MCF 10A (cell line): ENCODE measurements at regions of chr4 and their contacts with region 1.

Region 1: GRCh38 chr4:152045807-152046571 is 285.2 kb upstream of the GATB start:
- DNase-seq: no peak
- H3K4me3 Mint-ChIP-seq: no peak overlapping the region
- H3K27ac Mint-ChIP-seq: no peak overlapping the region
- H3K4me1 Mint-ChIP-seq: no peaks in the 10 kb centered on the region
- H3K27me3 Mint-ChIP-seq: no peaks in the 10 kb centered on the region
- CTCF ChIP-seq: peak; percentile 20

Region 2: GRCh38 chr4:152156442-152156841 is 110.5 kb after region 1 on chr4:
- CTCF ChIA-PET with region 1: no interaction called
- POLR2A ChIA-PET with region 1: no interaction called
- intact Hi-C with region 1: loop called (anchors 10 kb)
- DNase-seq: no peak
- H3K4me3 Mint-ChIP-seq: no peak overlapping the region
- H3K27ac Mint-ChIP-seq: no peak overlapping the region
- H3K4me1 Mint-ChIP-seq: no peaks in the 10 kb centered on the region
- H3K27me3 Mint-ChIP-seq: no peaks in the 10 kb centered on the region
- CTCF ChIP-seq: no peak